ENCODE measurements at regions of chr2 and their contacts with region 1.

Region 1: DNA sequence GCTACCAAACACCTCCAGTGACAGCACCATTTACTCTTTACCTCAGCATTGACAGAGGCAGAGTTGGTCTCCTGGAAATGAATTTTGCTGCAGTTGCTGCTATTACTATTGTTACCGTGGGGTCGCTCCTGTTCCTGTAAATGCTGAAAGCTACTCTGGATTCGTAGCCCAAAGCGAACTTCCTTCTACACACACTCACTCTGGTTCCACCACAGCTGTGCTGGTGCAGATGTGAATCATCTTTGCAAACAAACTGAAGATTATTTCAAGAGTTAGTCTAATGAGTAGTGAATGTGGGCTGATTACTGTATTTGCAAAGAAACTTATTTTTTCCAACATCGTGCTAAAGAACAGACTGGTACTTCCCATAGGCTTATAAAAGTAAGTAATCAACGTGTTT is 304.0 kb downstream of the LPIN1 start:
- DNase-seq: peak; percentile 90
- ATAC-seq: peak; percentile 83
- H3K4me3 ChIP-seq: no peak overlapping the region
- H3K27ac ChIP-seq: peak overlapping the region; percentile 78
- H3K4me1 ChIP-seq: peaks cover 42% of the 10 kb centered on the region
- H3K27me3 ChIP-seq: no peaks in the 10 kb centered on the region
- CTCF ChIP-seq: peak; percentile 76

Region 2: DNA sequence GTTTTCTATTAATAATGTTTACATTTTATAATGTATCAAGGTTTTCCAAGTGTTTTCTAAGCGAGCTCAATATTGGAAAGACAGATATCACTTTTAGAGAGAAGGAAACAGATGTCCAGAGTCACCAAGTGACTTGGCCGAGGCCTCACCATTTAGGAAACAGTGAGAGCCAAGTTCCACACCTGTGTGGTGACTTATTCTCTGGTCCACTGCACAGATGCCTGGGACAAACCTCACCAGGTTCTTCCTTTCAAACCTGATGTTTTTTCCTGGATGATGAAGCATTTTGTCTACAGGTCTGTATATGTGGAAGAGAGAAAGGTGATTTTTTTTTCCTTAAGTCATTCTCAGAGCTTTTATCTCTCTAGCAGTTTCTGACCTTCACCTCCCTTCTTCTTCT is 23.3 kb before region 1 on chr2:
- CTCF ChIA-PET with region 1: no interaction called
- POLR2A ChIA-PET with region 1: no interaction called
- intact Hi-C with region 1: no loop called
- DNase-seq: no peak
- ATAC-seq: no peak
- H3K4me3 ChIP-seq: no peak overlapping the region
- H3K27ac ChIP-seq: no peak overlapping the region
- H3K4me1 ChIP-seq: peaks cover 14% of the 10 kb centered on the region; the same call in 1 of the 2 replicates
- H3K27me3 ChIP-seq: no peaks in the 10 kb centered on the region
- CTCF ChIP-seq: no peak

Region 3: GRCh38 chr2:12087671-12088381 is 37.4 kb after region 1 on chr2:
- CTCF ChIA-PET with region 1: interaction called, 6 read pairs
- POLR2A ChIA-PET with region 1: no interaction called
- intact Hi-C with region 1: loop called (anchors 1 kb)
- DNase-seq: peak; percentile 96
- ATAC-seq: peak; percentile 75
- H3K4me3 ChIP-seq: peak overlapping the region; percentile 26; the same call in 1 of the 2 replicates
- H3K27ac ChIP-seq: peak overlapping the region; percentile 71
- H3K4me1 ChIP-seq: peaks cover 48% of the 10 kb centered on the region
- H3K27me3 ChIP-seq: no peaks in the 10 kb centered on the region
- CTCF ChIP-seq: no peak

Region 4: DNA sequence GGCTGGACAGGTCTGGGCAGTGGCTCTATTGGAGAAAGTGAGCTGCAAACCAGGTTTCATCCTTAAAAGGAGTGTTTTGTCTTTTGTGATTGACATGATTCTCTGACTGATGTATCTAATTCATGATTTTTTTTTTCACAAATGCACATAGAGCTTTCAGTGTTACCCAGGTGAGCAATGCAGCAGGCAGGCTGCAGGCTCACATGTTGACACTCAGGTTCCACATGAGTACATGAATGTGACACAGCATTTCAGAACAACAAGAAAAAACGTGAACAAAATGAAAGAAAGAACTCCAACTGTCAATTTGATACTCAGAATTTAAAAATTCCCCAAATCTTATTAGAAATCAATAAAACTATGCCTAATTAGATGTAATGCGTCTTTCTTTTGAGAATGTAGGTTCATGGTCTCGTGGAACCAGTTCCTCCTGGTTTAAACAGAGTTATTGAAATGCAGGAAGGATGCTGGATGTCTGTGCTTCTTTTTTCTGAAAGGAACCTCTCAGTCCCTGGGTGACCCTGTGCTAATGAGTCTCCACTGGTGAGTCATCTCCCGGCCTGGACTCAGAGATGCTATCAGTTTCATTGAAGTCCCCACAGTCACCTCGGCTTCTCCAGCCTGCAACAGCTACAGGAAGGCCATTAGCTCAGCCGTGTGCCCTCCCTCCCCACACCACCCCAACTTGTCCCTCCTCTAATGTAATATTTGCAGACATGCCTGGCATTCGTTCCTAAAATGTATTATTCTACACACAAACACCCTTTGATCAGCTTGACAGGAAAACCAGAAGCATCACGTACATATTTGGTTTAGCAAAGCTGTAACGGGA is 126.4 kb after region 1 on chr2:
- CTCF ChIA-PET with region 1: no interaction called
- POLR2A ChIA-PET with region 1: no interaction called
- intact Hi-C with region 1: loop called (anchors 2 kb)
- DNase-seq: peak; percentile 88
- ATAC-seq: peak; percentile 99
- H3K4me3 ChIP-seq: no peak overlapping the region
- H3K27ac ChIP-seq: peak overlapping the region; percentile 22
- H3K4me1 ChIP-seq: peaks cover 17% of the 10 kb centered on the region
- H3K27me3 ChIP-seq: no peaks in the 10 kb centered on the region
- CTCF ChIP-seq: no peak

Region 5: DNA sequence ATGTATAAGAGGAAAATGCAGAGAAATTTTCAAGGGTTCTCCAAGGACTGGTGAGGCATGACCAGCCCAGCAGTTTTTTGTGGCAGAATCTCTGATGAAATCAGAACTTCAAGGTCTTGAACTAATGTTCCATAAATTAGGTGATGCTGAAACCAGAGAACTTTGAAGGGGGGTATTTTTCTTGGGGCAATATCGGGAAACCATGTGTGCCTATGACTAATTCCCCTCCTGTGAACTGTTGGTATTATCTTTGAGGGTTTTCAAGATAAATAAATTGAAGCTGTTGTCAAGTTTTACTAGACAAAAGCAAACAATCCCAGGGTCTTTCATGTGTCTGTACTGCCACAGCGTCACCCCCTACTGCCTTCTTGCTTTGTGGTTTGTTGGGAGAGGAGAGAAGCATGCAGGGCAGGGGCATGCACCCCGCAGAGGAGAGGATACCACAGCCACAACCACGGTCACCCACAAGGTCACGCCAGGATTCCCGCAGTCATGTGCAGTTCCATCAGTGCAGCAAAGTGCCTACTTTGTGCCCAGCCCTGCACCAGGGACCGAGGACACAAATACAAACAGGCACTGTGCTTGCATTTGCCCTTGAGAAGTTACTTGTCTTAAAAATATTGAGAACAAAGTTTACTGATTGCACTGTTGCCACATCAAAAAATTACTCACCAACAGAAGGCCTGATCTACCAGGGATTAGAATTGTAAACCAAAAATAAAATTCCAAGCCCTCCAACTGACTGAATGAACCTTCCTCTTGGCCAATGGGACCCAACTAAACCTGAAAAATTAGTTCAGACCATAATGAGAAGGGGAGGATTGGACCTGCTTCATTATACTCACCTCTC is 253.0 kb after region 1 on chr2:
- CTCF ChIA-PET with region 1: no interaction called
- POLR2A ChIA-PET with region 1: no interaction called
- intact Hi-C with region 1: loop called (anchors 1 kb)
- DNase-seq: peak; percentile 87
- ATAC-seq: peak; percentile 80
- H3K4me3 ChIP-seq: no peak overlapping the region
- H3K27ac ChIP-seq: peak overlapping the region; percentile 78
- H3K4me1 ChIP-seq: peaks cover 41% of the 10 kb centered on the region
- H3K27me3 ChIP-seq: no peaks in the 10 kb centered on the region
- CTCF ChIP-seq: no peak

Region 6: GRCh38 chr2:13006829-13007717 is 956.7 kb after region 1 on chr2:
- CTCF ChIA-PET with region 1: no interaction called
- POLR2A ChIA-PET with region 1: interaction called, 3 read pairs
- intact Hi-C with region 1: loop called (anchors 5 kb)
- DNase-seq: peak; percentile 87
- ATAC-seq: peak; percentile 95
- H3K4me3 ChIP-seq: peak overlapping the region; percentile 62
- H3K27ac ChIP-seq: no peak overlapping the region
- H3K4me1 ChIP-seq: peaks cover 7% of the 10 kb centered on the region
- H3K27me3 ChIP-seq: no peaks in the 10 kb centered on the region
- CTCF ChIP-seq: peak; percentile 89